ENCODE measurements at regions of chrX and their contacts with region 1.

Region 1: GRCh38 chrX:74421036-74421739 is at the start of gene SLC16A2:
- DNase-seq: peak; percentile 72
- ATAC-seq: peak; percentile 54
- H3K4me3 ChIP-seq: peak within 1 kb of the TSS; percentile 79
- H3K27ac ChIP-seq: peak within 1 kb of the TSS; percentile 74
- H3K4me1 ChIP-seq: peaks cover 17% of the 10 kb centered on the region
- H3K27me3 ChIP-seq: no peaks in the 10 kb centered on the region
- CTCF ChIP-seq: no peak
- total RNA-seq, gene SLC16A2: 8.5 and 11.1 TPM in 2 replicates

Region 2: GRCh38 chrX:74179071-74179470 is 242.1 kb before region 1 on chrX:
- CTCF ChIA-PET with region 1: no interaction called
- POLR2A ChIA-PET with region 1: no interaction called
- intact Hi-C with region 1: no loop called
- DNase-seq: peak; percentile 62
- ATAC-seq: peak; percentile 68
- H3K4me3 ChIP-seq: no peak overlapping the region
- H3K27ac ChIP-seq: no peak overlapping the region
- H3K4me1 ChIP-seq: peaks cover 11% of the 10 kb centered on the region
- H3K27me3 ChIP-seq: no peaks in the 10 kb centered on the region
- CTCF ChIP-seq: no peak

Region 3: DNA sequence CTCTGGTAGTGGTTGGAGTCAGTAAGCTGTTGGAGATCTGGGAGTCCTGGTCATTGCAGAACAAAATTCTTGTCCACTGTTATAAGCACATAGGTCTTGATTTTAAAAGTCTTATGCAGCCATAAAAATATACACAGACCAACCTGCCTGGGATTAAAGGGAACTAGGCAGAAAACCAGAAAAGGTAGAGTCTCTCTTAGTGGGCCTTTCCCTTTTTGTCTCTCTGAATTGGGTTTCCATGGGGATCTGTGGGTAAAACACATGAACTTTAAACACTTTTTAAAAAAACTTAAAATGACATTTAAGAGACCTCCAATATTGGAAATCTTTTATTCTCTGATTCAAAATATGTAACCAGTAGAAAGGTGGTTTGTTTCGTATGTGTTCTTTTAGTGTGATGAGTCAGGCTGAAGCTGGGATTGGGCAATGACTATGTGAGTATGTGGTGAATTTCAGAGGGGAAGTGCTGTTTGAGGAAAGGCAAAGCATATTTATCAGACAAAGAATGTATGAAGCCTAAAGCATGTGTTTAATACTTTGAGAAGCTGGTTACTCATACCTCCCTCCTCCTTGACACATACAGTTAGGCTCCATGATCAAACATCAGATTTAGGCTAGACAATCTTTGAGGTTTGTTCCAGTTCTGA is 29.7 kb after region 1 on chrX:
- CTCF ChIA-PET with region 1: interaction called, 11 read pairs
- POLR2A ChIA-PET with region 1: no interaction called
- intact Hi-C with region 1: loop called (anchors 2 kb)
- DNase-seq: peak; percentile 89
- ATAC-seq: peak; percentile 85
- H3K4me3 ChIP-seq: peak overlapping the region; percentile 37; the same call in 1 of the 2 replicates
- H3K27ac ChIP-seq: peak overlapping the region; percentile 97
- H3K4me1 ChIP-seq: peaks cover 51% of the 10 kb centered on the region
- H3K27me3 ChIP-seq: no peaks in the 10 kb centered on the region
- CTCF ChIP-seq: no peak